ENCODE measurements at regions of chr18 and their contacts with region 1.

Region 1: DNA sequence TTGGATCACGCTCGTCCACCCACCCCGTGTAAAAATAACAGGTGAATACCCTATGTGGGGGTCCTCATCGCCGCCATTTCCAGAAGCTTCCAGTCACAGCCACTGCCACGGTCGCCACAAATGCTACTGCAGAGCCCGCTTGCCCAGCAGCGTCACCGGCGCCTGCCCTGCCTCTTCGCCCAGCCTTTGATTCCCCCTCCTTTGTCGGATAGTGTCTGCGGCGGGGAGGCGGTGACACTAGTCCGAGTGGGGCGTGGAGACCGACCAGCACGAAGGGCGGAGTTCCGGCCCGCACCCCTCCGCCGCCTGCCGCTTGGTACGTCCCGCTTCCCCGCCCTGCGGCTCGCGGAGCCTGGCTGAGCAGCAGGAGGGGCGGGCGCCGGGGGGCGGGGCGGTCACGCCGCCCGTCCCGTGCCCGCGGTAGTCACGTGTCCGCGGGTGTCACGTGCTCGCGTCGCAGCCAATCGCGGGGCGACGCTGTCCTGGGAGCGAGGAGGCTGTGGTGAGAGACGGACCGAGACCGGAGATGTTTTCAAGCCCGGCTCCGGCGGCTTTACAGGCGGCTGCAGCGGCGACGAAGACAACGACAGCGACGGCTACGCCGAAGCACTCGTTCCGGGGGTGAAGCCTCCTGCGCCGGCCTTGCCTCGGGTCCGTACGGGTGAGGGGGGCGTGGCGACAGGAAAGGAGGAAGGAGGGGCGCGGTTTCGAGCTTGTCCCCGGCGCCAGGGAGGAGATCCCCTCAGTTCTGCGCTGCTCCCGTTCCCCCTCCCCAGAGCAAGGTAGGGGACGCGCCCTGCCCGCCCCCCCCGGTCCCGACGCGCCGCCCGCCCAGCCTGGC is at the start of gene ANKRD12:
- DNase-seq: peak; percentile 87 to 99
- H3K4me3 ChIP-seq: peak within 1 kb of the TSS; percentile 87 to 93
- H3K27ac ChIP-seq: peak within 1 kb of the TSS; percentile 96 to 99
- H3K4me1 ChIP-seq: peaks cover 4 to 37% of the 10 kb centered on the region in 2 donors
- H3K27me3 ChIP-seq: no peaks in the 10 kb centered on the region
- CTCF ChIP-seq: no peak
- total RNA-seq, gene ANKRD12: 11.4 TPM

Region 2: DNA sequence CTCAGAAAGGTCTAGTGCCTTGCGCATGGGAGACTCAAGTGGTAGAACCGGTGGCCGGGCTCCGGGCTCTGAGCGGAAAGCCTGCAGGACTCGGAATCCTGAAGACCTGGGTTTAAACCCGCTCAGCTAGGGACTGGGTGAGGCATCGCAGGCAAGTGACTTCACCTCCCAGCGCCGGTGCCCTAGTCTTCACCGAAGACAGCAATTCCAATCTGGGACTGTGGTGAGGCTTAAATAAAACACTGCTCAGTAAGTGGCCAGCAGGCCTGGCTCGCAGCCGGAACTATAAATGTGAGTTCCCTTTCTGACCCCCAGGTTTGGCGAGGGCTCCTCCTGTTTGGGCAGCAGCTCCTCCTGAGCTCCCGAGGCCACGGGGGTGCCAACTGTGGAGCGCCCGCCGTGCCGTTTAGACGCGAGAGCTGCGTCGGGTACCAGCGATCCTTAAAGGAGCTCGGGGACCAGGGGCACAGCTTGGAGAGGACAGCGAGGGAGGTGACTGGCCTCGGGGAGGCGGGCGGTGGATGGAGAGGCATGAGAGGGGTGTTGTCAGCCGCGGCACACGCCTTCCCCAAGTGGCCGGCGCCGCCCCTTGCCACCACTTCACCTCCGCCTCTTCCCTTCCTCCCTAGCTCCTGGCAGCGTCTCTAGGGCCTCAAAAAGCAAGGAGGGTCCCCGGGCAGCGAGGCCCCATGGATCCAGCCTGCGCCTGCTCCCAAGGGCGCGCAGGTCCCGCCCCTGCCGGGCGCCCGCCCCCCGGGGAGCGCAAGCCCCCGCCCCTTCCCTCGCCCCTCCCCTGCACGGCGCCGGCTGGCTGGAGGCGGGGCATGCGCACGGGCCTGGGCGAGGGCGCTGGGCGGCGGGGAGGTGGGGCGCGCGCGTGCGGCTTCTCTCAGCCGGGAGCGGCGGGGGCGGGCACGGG is 431.9 kb before region 1 on chr18:
- intact Hi-C with region 1: loop called (anchors 10 kb)
- DNase-seq: peak; percentile 39 to 92
- H3K4me3 ChIP-seq: peak overlapping the region; percentile 79 to 97
- H3K27ac ChIP-seq: peak overlapping the region; percentile 89 to 96
- H3K4me1 ChIP-seq: peaks cover 4 to 11% of the 10 kb centered on the region in 2 donors
- H3K27me3 ChIP-seq: no peaks in the 10 kb centered on the region
- CTCF ChIP-seq: peak in 1 of 3 experiments; percentile 4

Region 3: GRCh38 chr18:9055185-9055584 is 81.3 kb before region 1 on chr18:
- intact Hi-C with region 1: loop called (anchors 5 kb)
- DNase-seq: no peak
- H3K4me3 ChIP-seq: no peak overlapping the region
- H3K27ac ChIP-seq: peak overlapping the region; percentile 52 to 57
- H3K4me1 ChIP-seq: peaks cover 0 to 7% of the 10 kb centered on the region in 2 donors
- H3K27me3 ChIP-seq: no peaks in the 10 kb centered on the region
- CTCF ChIP-seq: no peak

Region 4: DNA sequence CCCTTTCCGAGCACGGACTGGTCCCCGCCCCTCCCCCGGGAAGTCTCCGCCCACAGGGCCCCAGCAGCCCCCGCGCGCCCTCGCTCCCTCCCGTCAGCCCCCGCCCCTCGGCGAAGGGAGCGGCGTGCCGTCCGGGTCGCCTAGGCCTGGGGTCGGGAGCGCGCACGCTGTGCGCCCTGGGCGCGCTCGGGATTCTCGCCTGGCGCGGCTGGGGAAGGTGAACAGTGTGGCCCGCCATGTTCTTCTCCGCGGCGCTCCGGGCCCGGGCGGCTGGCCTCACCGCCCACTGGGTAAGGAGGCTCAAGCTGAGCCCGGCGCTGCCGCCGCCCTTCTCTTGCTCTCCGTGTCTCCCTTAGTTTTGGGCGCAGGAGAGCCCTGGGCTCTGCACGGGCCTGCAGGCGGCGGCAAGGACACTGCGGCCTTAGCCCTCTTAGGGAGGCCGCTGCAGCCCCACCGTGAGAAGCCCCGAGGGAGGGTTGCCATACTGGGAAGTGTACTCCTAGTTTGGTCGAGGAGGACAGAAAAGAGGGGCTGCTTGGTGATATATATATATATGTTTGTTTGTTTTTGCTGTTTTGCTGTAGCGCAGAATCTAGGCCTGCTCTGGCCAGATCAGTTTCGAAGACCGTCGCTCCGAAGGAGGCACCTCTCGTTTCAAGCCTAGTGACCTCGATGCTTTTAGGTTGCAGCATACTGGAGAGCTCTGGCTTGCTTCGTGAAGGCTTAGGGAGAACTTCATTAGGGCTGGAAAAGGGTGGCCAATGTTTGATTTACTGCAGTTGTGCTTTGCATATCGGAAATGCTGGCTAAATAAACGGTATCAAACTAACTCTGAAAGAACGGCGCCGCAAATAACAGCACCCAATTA is 33.8 kb before region 1 on chr18 and contains the start of gene NDUFV2:
- intact Hi-C with region 1: loop called (anchors 1 kb)
- DNase-seq: peak; percentile 80 to 98
- H3K4me3 ChIP-seq: peak within 1 kb of the TSS; percentile 67 to 77
- H3K27ac ChIP-seq: peak within 1 kb of the TSS; percentile 91 to 92
- H3K4me1 ChIP-seq: peaks cover 3 to 31% of the 10 kb centered on the region in 2 donors
- H3K27me3 ChIP-seq: no peaks in the 10 kb centered on the region
- CTCF ChIP-seq: peak in 1 of 3 experiments; percentile 16
- total RNA-seq, gene NDUFV2: 48.6 TPM

Region 5: DNA sequence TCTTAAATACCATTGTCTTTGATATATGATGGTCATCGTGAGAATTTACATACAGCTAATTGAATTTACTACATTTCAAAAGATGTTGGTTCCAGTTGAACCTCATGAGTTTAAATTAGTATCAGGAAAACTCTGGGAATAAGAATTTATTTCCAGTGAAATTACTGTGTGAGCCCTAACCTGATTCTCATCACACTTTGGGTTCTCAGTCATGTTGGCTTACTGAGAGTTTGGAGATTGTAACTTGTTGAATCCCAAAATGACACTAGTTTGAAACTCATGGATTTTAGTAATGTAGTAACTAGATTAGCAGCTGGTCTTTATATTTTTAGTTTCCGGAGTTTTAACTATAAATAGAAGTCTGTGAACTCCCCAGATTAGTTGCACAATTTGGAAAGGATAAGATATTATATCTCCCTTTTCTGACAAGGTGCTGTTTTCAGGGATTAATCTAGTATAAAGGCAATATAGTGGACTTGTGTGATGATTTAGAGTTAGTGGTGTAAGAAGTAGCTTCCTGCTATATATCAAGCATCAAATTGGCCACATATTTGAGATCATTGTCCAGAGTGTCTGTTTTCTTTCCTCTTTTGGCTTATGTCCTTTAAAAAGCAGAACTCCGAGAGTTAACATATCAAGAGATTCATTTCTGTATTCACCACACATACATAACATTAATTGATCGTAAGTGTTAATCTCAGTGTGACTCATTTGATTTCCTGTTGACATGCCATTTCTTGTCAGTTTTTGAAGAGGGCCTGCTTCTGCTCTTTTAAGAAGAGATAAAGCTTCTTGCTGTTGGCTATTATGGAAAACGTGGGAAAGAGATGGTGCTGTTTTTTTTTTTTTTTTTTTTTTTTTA is 18.3 kb before region 1 on chr18:
- intact Hi-C with region 1: loop called (anchors 1 kb)
- DNase-seq: no peak
- H3K4me3 ChIP-seq: peak overlapping the region; percentile 32 to 46
- H3K27ac ChIP-seq: peak overlapping the region; percentile 83 to 86
- H3K4me1 ChIP-seq: peaks cover 7 to 53% of the 10 kb centered on the region in 2 donors
- H3K27me3 ChIP-seq: no peaks in the 10 kb centered on the region
- CTCF ChIP-seq: no peak

Region 6: GRCh38 chr18:9233771-9234440 is 97.4 kb after region 1 on chr18:
- intact Hi-C with region 1: no loop called
- DNase-seq: no peak
- H3K4me3 ChIP-seq: no peak overlapping the region
- H3K27ac ChIP-seq: no peak overlapping the region
- H3K4me1 ChIP-seq: no peaks in the 10 kb centered on the region
- H3K27me3 ChIP-seq: no peaks in the 10 kb centered on the region
- CTCF ChIP-seq: no peak

Region 7: DNA sequence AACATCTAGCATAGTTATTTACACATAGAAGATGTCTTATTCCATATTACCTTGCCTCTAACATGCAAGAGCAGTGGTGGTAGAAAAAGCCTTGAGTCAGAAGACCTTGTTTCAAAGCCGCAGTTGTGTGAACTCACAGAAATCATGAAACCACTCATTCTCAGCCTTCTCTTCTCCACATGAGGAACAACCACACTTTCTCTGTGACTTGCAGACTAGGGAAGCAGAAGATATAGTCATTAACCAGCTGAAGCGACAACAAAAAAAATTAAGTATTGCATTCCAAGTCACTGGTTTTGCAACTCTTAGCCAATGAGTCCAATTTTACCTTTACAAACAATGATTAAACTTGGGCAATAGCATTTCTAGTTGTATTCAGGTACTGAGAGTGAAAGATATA is 217.1 kb after region 1 on chr18:
- intact Hi-C with region 1: loop called (anchors 5 kb)
- DNase-seq: no peak
- H3K4me3 ChIP-seq: no peak overlapping the region
- H3K27ac ChIP-seq: peak overlapping the region; percentile 70 to 79
- H3K4me1 ChIP-seq: peaks cover 0 to 33% of the 10 kb centered on the region in 2 donors
- H3K27me3 ChIP-seq: no peaks in the 10 kb centered on the region
- CTCF ChIP-seq: no peak

Region 8: GRCh38 chr18:9631814-9632496 is 495.4 kb after region 1 on chr18:
- intact Hi-C with region 1: no loop called
- DNase-seq: peak in 1 of 2 donors; percentile 53
- H3K4me3 ChIP-seq: peak overlapping the region in 1 of 2 donors; percentile 13
- H3K27ac ChIP-seq: no peak overlapping the region
- H3K4me1 ChIP-seq: peaks cover 0 to 8% of the 10 kb centered on the region in 2 donors
- H3K27me3 ChIP-seq: no peaks in the 10 kb centered on the region
- CTCF ChIP-seq: no peak

Region 9: GRCh38 chr18:9661564-9661963 is 525.0 kb after region 1 on chr18:
- intact Hi-C with region 1: no loop called
- DNase-seq: peak in 1 of 2 donors; percentile 46
- H3K4me3 ChIP-seq: no peak overlapping the region
- H3K27ac ChIP-seq: no peak overlapping the region
- H3K4me1 ChIP-seq: no peaks in the 10 kb centered on the region
- H3K27me3 ChIP-seq: no peaks in the 10 kb centered on the region
- CTCF ChIP-seq: no peak

Region 10: DNA sequence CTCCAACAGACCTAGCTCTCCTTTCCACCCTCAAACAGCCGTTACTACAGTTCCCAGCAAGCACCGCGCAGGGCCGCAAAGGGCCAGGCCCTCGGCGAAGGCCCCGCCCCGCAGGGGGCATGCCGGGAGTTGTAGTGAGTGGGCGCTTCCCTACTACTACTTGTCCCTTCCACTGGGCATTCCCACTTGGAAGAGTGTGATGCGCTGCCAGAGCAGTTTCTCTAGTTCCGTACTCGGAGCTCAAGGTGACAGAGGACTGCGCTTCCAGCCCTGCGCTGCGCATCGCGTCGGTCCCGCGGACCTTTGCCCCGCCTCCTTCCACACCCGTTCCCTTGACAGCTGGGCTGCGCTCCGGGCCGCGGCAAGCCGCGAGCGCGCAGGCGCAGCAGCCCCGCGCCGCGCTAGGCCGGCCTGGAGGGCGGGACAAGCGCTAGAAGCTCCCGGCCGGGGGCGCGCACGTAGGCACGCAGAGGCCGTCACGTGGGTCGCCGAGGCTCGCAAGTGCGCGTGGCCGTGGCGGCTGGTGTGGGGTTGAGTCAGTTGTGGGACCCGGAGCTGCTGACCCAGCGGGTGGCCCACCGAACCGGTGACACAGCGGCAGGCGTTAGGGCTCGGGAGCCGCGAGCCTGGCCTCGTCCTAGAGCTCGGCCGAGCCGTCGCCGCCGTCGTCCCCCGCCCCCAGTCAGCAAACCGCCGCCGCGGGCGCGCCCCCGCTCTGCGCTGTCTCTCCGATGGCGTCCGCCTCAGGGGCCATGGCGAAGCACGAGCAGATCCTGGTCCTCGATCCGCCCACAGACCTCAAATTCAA is 777.2 kb after region 1 on chr18 and contains the start of gene VAPA:
- intact Hi-C with region 1: loop called (anchors 10 kb)
- DNase-seq: peak; percentile 85 to 97
- H3K4me3 ChIP-seq: peak within 1 kb of the TSS; percentile 96 to 97
- H3K27ac ChIP-seq: peak within 1 kb of the TSS; percentile 99 to 100
- H3K4me1 ChIP-seq: peaks cover 3 to 21% of the 10 kb centered on the region in 2 donors
- H3K27me3 ChIP-seq: no peaks in the 10 kb centered on the region
- CTCF ChIP-seq: no peak
- total RNA-seq, gene VAPA: 109 TPM